CD14-positive monocyte (primary cell): ENCODE measurements at regions of chr5 and their contacts with region 1.

Region 1: GRCh38 chr5:74640450-74640953 is at the start of gene ENC1:
- DNase-seq: peak; percentile 81 to 83 (median 82)
- H3K4me3 ChIP-seq: peak within 1 kb of the TSS; percentile 76 to 86 (median 85)
- H3K4me3 Mint-ChIP-seq: peak within 1 kb of the TSS; percentile 98
- H3K27ac ChIP-seq: peak within 1 kb of the TSS; percentile 91 to 95
- H3K27ac Mint-ChIP-seq: peak within 1 kb of the TSS; percentile 93 to 98 (median 96)
- H3K4me1 ChIP-seq: peaks cover 53 to 70% of the 10 kb centered on the region in 2 donors
- H3K4me1 Mint-ChIP-seq: peaks cover 74% of the 10 kb centered on the region
- H3K27me3 ChIP-seq: no peaks in the 10 kb centered on the region
- H3K27me3 Mint-ChIP-seq: peaks cover 0 to 3% (median 0%) of the 10 kb centered on the region in 3 donors
- CTCF ChIP-seq: peak; percentile 38
- polyA plus RNA-seq, gene ENC1: 6.9 to 9.9 (median 9.6) TPM

Region 2: DNA sequence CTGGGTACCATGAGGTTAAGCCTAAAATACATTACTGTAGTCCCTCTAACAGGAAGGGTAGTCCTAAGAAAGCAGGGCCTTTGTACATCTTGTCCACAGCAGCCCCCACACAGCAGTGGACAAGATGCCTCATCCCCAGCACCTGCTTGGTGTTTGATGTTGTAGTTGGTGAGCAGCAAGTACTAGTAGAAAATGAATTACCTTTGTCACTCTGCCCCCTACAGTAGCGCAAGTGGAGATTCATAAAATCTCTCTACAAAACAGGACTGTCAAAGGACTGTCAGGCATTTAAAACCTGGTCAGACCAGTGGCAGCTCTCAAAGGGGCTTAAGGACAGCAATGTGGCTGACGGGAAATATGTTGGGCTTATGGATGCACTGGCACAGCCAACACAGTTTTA is 1345.1 kb before region 1 on chr5:
- intact Hi-C with region 1: no loop called
- DNase-seq: no peak
- H3K4me3 ChIP-seq: no peak overlapping the region
- H3K4me3 Mint-ChIP-seq: peak overlapping the region in 1 of 2 donors; percentile 71
- H3K27ac ChIP-seq: no peak overlapping the region
- H3K27ac Mint-ChIP-seq: no peak overlapping the region
- H3K4me1 ChIP-seq: no peaks in the 10 kb centered on the region
- H3K4me1 Mint-ChIP-seq: peaks cover 13% of the 10 kb centered on the region
- H3K27me3 ChIP-seq: peaks cover 70 to 89% of the 10 kb centered on the region in 2 donors
- H3K27me3 Mint-ChIP-seq: peaks cover 76 to 94% (median 81%) of the 10 kb centered on the region in 3 donors
- CTCF ChIP-seq: no peak

Region 3: DNA sequence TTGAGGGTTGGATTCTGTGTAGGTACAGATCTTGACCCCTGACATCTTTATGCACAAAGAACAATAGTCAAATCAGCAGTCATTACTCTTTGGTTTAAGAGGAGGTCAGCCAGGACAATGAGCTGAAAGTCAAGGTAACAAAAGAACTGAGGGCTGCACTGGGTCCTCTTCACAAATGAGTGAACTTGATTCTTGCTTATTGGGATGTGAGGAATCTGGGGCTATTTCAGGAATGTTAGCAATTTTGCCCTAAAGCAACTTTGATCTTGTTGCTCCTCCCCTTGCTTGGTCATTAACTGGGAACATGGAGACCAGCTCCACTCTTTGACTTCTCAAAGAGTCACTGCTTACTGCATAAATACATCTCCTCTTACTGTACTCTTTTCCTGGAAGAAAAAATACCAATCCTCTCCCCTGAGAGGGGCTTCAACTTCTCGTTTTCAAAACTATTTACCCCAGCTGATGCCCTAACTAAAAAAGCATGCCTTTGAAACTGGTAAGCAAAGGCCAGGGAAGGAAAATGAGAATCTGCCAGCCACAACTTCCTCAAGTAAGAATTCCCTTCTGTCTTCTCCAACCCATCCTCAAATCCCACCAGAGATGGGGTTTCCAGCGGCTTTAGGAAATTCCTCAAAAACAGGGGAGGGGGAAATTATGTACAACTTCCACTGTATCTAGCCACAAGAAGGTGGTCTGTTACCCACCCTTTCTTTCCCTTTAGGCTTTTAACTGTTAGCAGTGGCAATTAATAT is 368.3 kb before region 1 on chr5:
- intact Hi-C with region 1: loop called in 1 of 2 experiments (anchors 10 kb)
- DNase-seq: no peak
- H3K4me3 ChIP-seq: no peak overlapping the region
- H3K4me3 Mint-ChIP-seq: no peak overlapping the region
- H3K27ac ChIP-seq: no peak overlapping the region
- H3K27ac Mint-ChIP-seq: no peak overlapping the region
- H3K4me1 ChIP-seq: peaks cover 25 to 33% of the 10 kb centered on the region in 2 donors
- H3K4me1 Mint-ChIP-seq: peaks cover 36% of the 10 kb centered on the region
- H3K27me3 ChIP-seq: no peaks in the 10 kb centered on the region
- H3K27me3 Mint-ChIP-seq: peaks cover 0 to 7% (median 0%) of the 10 kb centered on the region in 3 donors
- CTCF ChIP-seq: no peak

Region 4: DNA sequence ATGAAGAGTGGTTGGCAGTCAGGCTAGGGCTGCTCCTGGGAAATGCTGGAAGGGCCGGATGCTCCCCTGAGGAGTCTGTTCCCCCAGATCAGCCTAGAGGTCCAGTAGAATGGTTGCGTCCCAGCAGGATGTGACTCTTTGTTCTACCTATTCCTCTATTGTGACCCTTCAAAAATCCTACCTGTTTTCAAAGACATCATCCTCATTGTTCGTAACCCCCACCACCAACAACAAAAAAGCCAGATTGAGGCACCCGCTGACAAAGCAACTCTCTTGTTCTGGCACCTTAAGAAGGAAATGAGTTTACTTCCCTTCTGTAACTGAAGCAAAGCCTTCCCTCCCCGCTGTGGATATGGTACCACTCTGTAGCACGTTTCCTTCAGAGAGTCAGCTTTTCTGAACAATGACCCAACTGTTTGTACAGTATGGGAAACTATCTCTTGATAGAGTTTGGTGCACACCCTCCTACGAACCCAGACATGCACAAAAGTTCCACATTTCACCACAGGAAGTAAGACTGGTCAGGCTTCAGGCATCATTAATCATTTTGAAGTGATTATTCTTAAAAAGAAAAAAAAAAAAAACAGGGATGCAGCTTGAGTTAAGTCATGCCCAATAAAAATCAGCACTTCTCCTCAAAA is 207.1 kb before region 1 on chr5:
- intact Hi-C with region 1: loop called in 1 of 2 experiments (anchors 5 kb)
- DNase-seq: peak; percentile 76 to 89 (median 84)
- H3K4me3 ChIP-seq: peak overlapping the region in 2 of 3 experiments; percentile 32 to 66
- H3K4me3 Mint-ChIP-seq: peak overlapping the region; percentile 27 to 68
- H3K27ac ChIP-seq: peak overlapping the region; percentile 55 to 82
- H3K27ac Mint-ChIP-seq: peak overlapping the region; percentile 76 to 94 (median 92)
- H3K4me1 ChIP-seq: peaks cover 53 to 57% of the 10 kb centered on the region in 2 donors
- H3K4me1 Mint-ChIP-seq: peaks cover 59% of the 10 kb centered on the region
- H3K27me3 ChIP-seq: no peaks in the 10 kb centered on the region
- H3K27me3 Mint-ChIP-seq: peaks cover 0 to 2% (median 0%) of the 10 kb centered on the region in 3 donors
- CTCF ChIP-seq: no peak